Activated T-helper 1 cell treated with anti-CD3 and anti-CD28 coated beads, Interleukin-12 subunit alpha, Interleukin-12 subunit beta, Interleukin-2, Interleukin-4 antibody, amounts not matched to agents 30 ng/mL and 10 ng/mL and 1 ng/mL, durations not matched to agents 14 hours and 24 hours and 36 hours (primary cell): ENCODE measurements at regions of chr7 and their contacts with region 1.

Region 1: DNA sequence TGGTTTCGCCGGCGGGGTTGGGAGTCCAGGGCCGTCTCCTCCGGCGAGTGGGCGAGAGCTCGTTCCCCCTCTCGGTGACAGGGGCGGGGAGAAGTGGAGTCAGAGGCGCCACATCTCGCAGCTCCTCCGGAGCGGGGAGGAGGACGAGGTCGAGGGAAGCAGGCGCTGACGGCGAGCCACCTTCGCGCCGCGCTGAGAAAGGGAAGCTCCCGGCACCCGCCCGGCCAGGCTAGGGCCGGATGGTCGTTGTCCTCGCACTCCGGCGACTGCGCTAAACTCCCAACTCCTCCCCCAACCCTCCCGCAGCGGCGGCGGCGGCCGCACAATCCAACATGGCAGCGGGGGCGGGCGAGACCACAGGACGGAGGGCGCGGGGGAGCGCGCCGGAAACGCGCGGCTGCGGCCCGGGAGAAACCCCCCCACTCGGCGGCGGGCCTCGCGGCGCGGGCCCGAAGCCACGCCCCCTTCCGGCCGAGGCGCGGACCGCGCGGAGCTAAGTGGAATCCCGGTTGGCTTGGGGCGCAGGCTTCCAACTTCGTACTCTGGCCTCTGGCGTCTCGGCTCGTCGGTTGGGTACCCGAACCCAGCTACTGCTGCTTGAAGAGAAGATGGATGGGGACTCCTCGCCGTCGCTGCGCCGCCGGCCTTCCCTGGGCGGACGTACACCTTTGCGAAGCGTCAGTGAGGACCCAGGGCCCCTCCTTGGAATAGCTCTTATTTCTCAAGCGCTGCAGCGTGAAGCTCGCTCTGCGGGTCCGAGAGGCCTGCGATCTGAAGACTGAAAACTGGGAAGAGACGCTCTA is at the start of gene WASL:
- DNase-seq: peak; percentile 86
- H3K4me3 Mint-ChIP-seq: peak within 1 kb of the TSS; percentile 99
- H3K27ac Mint-ChIP-seq: peak within 1 kb of the TSS; percentile 96
- H3K4me1 Mint-ChIP-seq: peaks cover 62% of the 10 kb centered on the region
- H3K27me3 Mint-ChIP-seq: peaks cover 11% of the 10 kb centered on the region
- total RNA-seq, gene WASL: 7.3 and 7.5 TPM in 2 replicates

Region 2: GRCh38 chr7:123534383-123535260 is 214.3 kb before region 1 on chr7 and contains the start of gene IQUB:
- intact Hi-C with region 1: loop called (anchors 1 kb)
- DNase-seq: peak; percentile 89
- H3K4me3 Mint-ChIP-seq: peak within 1 kb of the TSS; percentile 91
- H3K27ac Mint-ChIP-seq: peak within 1 kb of the TSS; percentile 88
- H3K4me1 Mint-ChIP-seq: peaks cover 26% of the 10 kb centered on the region
- H3K27me3 Mint-ChIP-seq: peaks cover 30% of the 10 kb centered on the region
- total RNA-seq, gene IQUB: 0.44 TPM in 1 of 2 replicates, not detected in the other

Region 3: GRCh38 chr7:123682690-123683089 is 66.2 kb before region 1 on chr7:
- intact Hi-C with region 1: loop called (anchors 2 kb)
- DNase-seq: no peak
- H3K4me3 Mint-ChIP-seq: no peak overlapping the region
- H3K27ac Mint-ChIP-seq: no peak overlapping the region
- H3K4me1 Mint-ChIP-seq: no peaks in the 10 kb centered on the region
- H3K27me3 Mint-ChIP-seq: no peaks in the 10 kb centered on the region

Region 4: DNA sequence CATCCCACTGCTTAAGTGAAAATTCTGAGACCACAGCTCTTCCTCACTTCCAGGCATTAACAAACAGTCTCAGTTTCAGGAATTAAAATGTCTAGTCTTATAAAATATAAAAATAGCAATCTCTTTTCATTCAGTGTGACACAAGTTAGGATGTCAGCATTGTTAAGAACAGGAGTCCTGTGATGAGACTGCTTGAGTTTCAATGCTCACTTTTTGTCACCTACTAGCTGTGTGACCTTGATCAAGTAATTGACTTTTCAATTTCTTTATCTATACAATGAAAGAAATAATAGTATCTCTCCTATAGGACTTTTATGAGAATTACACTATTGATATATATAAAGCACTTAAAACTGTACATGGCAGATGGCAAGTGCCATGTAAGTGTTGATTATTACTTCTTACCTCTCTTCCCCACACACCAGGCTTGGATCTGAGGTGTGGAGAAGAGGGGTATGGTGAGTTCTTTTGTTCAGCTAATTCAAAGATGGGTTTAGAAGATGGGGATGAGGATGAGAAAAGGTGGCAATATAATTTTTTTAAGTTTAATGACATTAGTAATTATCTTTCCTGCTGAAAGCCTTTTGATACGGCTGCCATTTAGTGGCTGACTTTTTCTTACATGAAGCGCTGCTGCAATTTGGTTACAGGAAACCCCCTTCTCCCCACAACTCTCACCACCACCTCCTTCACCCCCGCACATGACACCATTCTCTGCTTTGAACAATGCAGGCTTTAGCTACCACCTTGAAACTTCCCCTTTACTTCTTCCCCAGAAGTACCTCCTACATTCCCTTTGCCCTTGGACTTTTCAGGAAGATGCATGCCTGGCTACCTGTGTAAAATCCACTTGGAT is 75.2 kb after region 1 on chr7:
- intact Hi-C with region 1: loop called (anchors 1 kb)
- DNase-seq: peak; percentile 44
- H3K4me3 Mint-ChIP-seq: peak overlapping the region; percentile 38
- H3K27ac Mint-ChIP-seq: peak overlapping the region; percentile 77
- H3K4me1 Mint-ChIP-seq: peaks cover 25% of the 10 kb centered on the region
- H3K27me3 Mint-ChIP-seq: peaks cover 7% of the 10 kb centered on the region

Region 5: DNA sequence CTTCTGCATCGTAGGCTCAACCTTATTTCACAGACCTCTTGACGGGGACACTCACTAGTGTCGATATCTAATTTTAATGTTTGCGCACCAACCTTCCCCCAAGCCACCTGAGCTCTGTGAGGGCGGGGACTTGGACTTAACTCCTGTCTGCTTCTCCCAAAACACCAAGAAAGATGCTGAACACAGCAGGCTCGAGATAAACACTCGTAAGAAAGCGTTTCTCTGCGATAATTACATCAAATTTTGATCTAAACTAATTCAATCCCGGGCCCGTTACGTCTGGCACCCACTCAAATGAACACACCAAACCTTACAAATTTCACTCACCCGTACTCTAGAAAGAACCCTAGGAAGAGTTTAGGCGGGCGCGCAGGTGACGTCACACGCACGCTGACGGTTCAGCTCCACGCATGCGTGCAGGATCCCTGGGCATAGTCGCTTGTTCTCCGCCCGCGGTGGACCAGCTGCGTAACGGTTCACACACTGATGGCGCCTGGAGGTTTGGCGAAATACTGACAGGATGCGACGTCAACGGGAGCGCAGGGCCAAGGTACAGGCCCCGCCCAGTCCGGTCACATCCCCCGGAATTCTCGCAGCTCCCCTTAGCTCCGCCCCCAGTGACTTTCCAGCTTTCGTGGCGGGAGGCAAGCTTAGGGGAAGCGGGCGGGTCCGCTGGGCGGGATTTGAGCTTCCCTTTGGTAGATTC is 1180.7 kb after region 1 on chr7 and contains the start of gene POT1:
- intact Hi-C with region 1: loop called (anchors 5 kb)
- DNase-seq: peak; percentile 95
- H3K4me3 Mint-ChIP-seq: peak within 1 kb of the TSS; percentile 97
- H3K27ac Mint-ChIP-seq: peak within 1 kb of the TSS; percentile 87
- H3K4me1 Mint-ChIP-seq: peaks cover 39% of the 10 kb centered on the region
- H3K27me3 Mint-ChIP-seq: peaks cover 2% of the 10 kb centered on the region
- total RNA-seq, gene POT1: 27.1 and 31.1 TPM in 2 replicates